ENCODE measurements at regions of chr1 and their contacts with region 1.

Region 1: DNA sequence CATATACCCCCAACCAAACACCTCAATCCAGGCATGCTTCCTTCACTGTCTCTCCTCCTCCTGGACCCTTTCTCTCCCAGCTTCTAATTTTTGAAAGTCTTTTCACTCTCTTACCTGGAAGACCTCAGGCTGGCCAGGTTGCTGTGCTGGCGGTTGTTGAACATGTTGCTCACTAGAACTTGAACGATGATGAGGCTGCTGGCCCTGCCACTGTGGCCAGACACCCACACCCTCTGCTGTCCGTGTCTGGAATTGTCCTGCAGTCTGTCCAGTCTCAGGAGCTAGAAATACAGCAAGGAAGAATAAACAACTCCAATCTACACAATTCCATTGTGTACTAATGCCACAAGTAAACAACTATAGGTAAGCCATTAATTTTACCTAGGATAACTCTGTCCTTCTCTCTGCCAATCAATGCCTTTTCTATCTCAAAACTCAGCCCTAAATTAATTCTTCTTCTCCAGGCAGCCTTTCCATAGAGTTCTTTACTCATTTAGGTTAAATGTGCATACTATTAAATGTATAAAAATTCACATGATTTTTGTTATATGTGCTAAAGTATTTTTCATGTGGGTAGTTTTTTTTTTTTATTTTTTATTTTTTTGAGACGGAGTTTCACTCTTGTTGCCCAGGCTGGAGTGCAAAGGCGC is 5.1 kb upstream of the CTSK start:
- DNase-seq: peak; percentile 28 to 69 (median 54)
- ATAC-seq: peak; percentile 68 to 86 (median 82)
- H3K4me3 ChIP-seq: no peak overlapping the region
- H3K27ac ChIP-seq: no peak overlapping the region
- H3K4me1 ChIP-seq: peaks cover 0 to 11% (median 1%) of the 10 kb centered on the region in 12 donors
- H3K27me3 ChIP-seq: no peaks in the 10 kb centered on the region
- CTCF ChIP-seq: peak; percentile 31 to 62 (median 52)
- POLR2A ChIP-seq: no peak

Region 2: DNA sequence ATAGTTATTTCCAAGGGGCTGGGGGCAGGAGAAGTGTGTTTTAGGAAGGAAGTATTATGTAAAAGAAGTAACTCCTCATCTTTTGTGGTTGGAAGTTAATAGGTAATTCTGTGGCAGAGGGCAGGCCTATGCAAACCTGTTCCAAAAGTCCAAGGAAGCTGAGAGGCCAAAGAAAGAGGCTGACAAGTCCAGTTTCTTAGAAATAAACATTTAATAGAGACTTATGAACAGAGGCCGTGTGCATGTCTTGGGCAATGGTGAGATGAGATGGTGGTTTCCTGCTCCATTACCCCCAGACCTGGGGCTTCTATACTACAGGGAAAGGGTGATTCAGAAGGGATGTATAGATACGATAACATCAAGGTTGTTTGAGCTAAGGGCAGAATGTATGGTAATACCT is 563.2 kb before region 1 on chr1:
- intact Hi-C with region 1: loop called in 1 of 10 experiments (anchors 5 kb)
- DNase-seq: no peak
- ATAC-seq: no peak
- H3K4me3 ChIP-seq: no peak overlapping the region
- H3K27ac ChIP-seq: no peak overlapping the region
- H3K4me1 ChIP-seq: no peaks in the 10 kb centered on the region
- H3K27me3 ChIP-seq: no peaks in the 10 kb centered on the region
- CTCF ChIP-seq: no peak
- POLR2A ChIP-seq: no peak

Region 3: GRCh38 chr1:150552093-150552691 is 261.0 kb before region 1 on chr1:
- intact Hi-C with region 1: loop called in 3 of 10 experiments (anchors 10 kb)
- DNase-seq: peak; percentile 82 to 91 (median 87)
- ATAC-seq: peak; percentile 56 to 77 (median 70)
- H3K4me3 ChIP-seq: peak overlapping the region in 1 of 12 donors; percentile 35
- H3K27ac ChIP-seq: peak overlapping the region in 11 of 12 donors; percentile 28 to 93 (median 80)
- H3K4me1 ChIP-seq: peaks cover 0 to 61% (median 35%) of the 10 kb centered on the region in 12 donors
- H3K27me3 ChIP-seq: peaks cover 0 to 3% (median 0%) of the 10 kb centered on the region in 9 donors
- CTCF ChIP-seq: no peak
- POLR2A ChIP-seq: peak in 1 of 2 donors; percentile 52

Region 4: DNA sequence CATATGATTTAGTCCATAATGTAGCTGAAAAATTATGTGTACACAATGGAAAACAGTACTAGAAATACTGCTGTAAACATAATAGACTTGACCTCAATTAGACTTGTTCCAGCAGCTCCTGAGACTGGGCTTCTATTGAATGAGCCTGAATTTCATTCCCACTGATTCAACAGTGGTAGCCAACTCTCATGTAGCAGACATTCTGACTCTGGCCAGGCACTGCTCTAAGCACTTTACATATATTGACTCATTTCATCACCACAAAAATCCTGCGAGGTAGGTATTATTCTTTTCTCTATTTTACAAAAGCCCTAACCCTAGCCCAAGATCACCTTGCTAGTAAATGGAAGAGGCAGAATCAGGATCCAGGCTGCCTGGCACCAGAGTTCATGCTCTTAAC is 34.8 kb before region 1 on chr1:
- intact Hi-C with region 1: no loop called
- DNase-seq: no peak
- ATAC-seq: no peak
- H3K4me3 ChIP-seq: no peak overlapping the region
- H3K27ac ChIP-seq: no peak overlapping the region
- H3K4me1 ChIP-seq: peaks cover 0 to 11% (median 0%) of the 10 kb centered on the region in 12 donors
- H3K27me3 ChIP-seq: no peaks in the 10 kb centered on the region
- CTCF ChIP-seq: no peak
- POLR2A ChIP-seq: no peak